ENCODE measurements at regions of chr4 and their contacts with region 1.

Region 1: GRCh38 chr4:184424993-184425758 is 49.2 kb downstream of the IRF2 start:
- DNase-seq: no peak
- ATAC-seq: peak; percentile 43

Region 2: DNA sequence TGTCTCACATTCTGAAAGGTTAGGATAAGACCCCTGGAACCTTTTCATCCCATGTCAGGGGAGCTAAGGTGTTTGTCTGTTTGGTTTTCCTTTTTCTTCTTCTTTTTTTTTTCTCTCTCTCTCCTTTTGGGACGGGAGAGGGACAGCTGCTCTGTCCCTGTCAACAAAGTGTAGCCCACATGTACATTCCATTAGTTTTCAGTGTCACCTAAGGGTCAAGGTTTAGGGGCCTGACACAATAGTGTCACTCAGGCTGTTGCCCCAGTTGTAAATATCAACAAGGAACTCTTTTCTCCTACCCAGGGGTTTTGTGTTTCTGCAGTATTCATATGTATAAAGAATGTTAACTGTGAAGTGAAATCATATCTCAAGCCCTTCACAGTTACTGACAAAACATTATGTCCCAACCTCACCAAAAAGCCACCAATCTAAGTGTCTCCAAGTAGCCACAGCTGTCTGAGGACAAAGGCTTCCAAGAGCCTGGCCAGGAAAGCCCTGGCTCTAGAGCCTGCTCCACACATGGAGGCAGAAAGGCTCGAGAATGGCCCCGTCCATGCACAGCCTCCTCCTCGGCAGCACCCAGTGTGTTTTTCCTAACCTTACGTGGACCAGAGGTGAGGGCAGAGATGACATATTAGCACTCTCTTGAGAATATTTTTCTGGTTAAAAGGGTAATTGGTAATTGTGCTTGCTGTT is 39.7 kb after region 1 on chr4:
- intact Hi-C with region 1: loop called (anchors 1 kb)
- DNase-seq: no peak
- ATAC-seq: peak; percentile 21

Measured in Right ventricle myocardium inferior (tissue), 1 donor.